Right cardiac atrium (tissue), 5 donors: ENCODE measurements at regions of chr2 and their contacts with region 1.

Region 1: DNA sequence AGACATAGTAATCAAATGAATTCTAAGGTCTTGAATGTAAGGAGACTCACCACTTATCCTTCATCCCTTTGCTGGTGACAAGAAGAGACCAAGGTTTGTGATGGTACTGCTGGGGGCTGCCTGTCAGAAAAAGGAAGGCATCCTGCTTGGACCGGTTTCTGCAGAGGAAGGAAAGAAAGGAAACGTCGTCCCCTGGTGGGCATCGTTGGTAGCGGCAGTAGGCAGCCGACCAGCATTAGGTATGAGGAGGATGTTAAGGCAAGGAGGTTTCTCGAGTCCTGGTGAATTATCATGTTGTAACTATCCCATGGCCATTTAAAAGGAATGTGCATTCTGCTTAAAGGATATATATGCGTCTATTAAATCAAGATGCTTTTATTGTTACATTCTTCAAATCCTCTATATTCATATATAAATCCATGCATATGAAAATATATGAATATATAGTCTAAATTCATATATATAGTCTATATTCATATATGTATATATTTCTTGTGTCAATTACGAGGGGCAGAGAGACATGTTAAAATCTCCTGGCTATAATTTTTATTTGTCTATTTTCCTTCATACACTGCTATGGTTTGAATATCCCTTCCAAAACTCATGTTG is 94.4 kb upstream of the TGFA start:
- DNase-seq: peak; percentile 48 to 81 (median 77)
- ATAC-seq: peak; percentile 54 to 67
- H3K4me3 ChIP-seq: no peak overlapping the region
- H3K27ac ChIP-seq: no peak overlapping the region
- H3K4me1 ChIP-seq: no peaks in the 10 kb centered on the region
- H3K27me3 ChIP-seq: no peaks in the 10 kb centered on the region

Region 2: GRCh38 chr2:70214953-70215549 is 432.9 kb before region 1 on chr2:
- intact Hi-C with region 1: no loop called
- DNase-seq: no peak
- ATAC-seq: no peak
- H3K4me3 ChIP-seq: no peak overlapping the region
- H3K27ac ChIP-seq: no peak overlapping the region
- H3K4me1 ChIP-seq: no peaks in the 10 kb centered on the region
- H3K27me3 ChIP-seq: no peaks in the 10 kb centered on the region

Region 3: DNA sequence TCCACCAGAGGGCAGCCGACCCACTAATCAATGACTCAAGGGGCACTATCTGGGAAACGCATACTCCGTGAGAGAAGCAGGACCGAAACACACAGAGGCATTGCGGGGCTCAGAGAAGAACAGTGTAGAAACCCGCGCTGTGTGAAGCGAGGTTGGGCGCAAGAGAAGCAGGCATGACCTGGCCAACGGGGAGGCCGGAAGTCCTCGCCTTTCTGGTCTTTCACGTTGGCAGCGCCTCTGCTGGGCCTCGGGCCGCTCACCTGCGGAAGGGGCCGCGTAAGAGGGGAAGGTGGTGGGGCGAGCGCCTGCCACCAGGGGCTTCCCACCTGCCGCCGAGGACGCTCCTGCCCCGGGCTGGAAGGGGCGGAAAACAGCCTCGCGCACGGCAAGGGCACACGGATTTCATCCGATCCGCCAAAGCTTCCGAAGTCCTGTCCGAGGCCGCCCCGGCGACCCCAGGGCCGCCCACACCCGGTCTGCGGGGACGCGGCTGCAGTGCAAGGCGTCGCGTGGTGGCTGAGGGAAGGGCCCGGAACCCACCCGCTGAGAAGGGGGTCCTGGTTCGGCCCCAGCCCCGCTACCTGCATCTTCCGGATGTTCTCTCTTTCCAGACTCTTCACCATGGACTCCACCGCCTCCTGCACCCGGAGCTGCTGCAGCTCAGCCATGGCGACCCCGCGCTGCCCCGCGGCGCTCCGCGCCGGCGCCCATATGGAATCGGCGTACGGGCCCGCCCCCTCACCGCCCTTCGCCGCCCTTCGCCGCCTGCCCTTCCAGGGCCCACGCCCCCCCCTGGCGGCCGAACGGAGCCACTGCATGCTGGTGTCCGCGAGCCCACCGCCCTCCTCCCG is 346.4 kb before region 1 on chr2 and contains the start of gene FAM136A:
- intact Hi-C with region 1: loop called in 2 of 4 experiments (anchors 5 to 10 kb)
- DNase-seq: peak; percentile 88 to 95 (median 95)
- ATAC-seq: peak; percentile 95 to 96
- H3K4me3 ChIP-seq: peak within 1 kb of the TSS; percentile 86
- H3K27ac ChIP-seq: peak within 1 kb of the TSS; percentile 28
- H3K4me1 ChIP-seq: no peaks in the 10 kb centered on the region
- H3K27me3 ChIP-seq: no peaks in the 10 kb centered on the region
- total RNA-seq, gene FAM136A: 18.8 to 26.0 (median 22.1) TPM

Region 4: DNA sequence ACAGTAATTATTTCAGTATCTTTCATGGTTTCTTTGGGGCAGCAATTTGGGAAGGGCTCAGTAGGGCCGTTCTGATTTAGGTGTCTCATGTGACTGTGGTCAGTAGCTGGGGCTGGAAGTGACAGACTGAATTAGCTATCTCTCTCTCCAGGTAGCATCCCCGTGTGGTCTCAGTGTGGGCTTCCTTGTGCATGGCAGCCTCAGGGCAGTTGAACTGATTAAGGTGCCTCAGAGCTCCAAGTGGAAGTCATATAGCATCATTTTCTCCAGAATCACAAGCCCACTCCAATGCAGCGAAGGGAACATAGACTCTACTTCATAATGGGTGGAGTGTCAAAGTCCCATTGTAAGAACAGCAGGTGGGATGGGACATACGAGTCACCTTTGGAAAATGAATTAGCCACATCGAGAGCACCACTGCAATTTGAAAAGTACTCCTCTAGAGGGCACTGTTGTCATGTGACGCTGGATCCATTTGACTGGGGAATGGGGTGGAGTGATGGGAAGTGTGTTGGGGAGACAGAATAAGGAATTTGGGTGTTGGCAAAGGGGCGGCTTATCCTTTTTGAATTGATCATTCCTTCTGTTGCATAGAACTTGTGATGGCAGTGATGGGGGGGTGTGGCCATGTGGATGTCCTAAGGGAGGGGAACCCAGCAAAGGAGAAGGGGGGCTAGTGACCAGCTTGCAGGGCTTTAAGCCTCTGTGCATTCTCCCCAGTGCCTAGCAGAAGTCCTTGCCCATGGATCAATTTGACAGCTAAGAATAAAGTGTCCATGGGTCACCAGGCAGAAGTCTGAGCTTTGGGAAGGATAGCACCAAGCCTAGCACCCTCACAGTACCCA is 306.8 kb before region 1 on chr2:
- intact Hi-C with region 1: loop called in 1 of 4 experiments (anchors 10 kb)
- DNase-seq: no peak
- ATAC-seq: peak; percentile 54 to 61
- H3K4me3 ChIP-seq: no peak overlapping the region
- H3K27ac ChIP-seq: no peak overlapping the region
- H3K4me1 ChIP-seq: no peaks in the 10 kb centered on the region
- H3K27me3 ChIP-seq: peaks cover 3% of the 10 kb centered on the region